ENCODE measurements at regions of chr15 and their contacts with region 1.

Region 1: DNA sequence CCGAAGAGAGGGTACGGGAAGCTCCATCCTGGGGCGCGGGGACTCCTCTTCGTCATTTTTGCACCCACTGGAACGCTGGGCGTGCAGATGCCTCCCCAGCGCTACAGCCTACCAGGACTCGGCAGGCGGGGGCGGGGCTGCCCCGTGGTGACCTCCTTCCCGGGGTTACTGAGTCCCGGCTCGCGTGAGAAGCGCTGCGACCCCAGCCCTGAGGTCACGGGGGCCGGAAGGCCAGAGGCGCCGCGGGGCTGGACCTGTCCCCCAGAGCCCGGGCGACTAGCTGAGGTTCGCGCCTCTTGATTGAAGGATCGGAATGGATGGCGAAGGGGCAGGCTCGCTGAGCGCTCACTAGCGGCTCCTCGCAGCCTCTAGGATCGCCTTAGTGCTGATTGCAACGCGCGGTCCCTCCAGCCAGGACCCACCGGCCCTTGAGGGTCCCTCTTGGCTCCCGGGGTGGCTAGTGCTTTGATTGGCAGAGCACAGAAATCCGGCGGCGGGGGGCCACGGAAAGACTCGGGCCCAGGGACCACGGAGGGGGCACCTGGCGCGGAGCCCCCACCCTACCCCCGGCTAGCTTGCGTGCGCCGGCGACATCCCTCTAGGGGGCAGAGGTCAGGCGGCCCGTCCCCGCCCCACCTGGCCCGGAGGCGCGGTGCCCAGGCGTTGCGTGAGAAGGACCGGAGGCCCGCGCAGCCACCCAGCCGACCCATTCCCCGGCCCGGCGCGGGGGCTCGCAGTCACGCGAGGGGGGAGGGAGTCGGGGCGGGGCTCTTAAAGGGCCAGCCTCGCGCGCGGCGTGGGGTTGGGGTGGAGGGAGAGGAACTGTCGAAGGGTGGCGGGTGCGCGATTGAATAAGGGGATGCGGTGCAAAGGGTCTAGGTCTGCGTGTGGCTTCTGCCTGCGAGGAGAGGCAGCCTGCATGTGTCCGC is 781 bp upstream of the CYP1A1 start:
- DNase-seq: peak; percentile 83

Region 2: GRCh38 chr15:75327005-75327404 is 600.9 kb after region 1 on chr15:
- intact Hi-C with region 1: loop called in 1 of 2 experiments (anchors 5 kb)
- DNase-seq: no peak